Naive thymus-derived CD4-positive, alpha-beta T cell (primary cell): ENCODE measurements at regions of chr19 and their contacts with region 1.

Region 1: DNA sequence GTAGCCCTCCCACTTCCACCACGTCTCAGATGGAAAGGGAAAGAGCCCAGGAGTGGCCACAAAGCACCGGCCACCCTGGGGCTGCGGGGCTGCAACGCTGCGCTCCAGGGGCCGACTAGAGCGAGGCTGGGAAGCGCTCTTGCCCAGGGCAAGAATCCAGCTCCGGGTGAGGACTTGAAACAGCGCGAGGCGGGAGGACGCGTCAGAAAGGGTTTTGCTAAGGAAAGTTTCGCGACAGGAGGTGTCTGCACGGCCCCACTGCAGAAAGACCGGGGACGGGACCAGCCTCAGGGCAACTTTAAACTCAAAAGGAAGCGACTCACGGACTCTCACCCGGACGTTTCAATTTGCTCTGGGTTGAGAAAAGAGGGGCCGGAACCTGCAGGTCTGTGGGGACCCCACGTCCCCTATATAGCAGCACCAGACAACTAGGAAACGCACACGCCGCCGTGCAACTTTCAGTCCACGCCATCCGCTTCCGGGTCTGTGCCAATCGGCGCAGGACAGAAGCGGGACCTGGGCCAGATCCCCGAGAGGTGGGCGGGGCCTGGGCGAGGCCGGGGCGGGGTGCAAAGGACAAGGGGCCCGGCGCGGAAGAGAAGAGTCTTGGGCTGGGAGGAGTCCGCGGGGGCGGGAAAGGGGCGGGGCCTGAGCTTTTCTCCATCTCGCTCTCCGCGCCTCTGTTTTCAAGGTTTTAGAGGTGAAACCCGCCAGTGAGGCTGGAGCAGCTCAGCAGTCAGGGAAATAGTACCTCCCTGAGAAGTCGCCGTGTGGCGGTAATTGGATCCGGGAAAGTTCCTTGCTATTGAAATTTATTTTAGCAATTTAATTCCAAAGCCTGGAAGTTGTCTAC is at the start of gene ZNF816:
- DNase-seq: peak; percentile 94 to 99 (median 98)
- ATAC-seq: peak; percentile 100
- H3K4me3 ChIP-seq: peak within 1 kb of the TSS; percentile 77
- H3K4me3 Mint-ChIP-seq: peak within 1 kb of the TSS; percentile 87 to 96 (median 94)
- H3K27ac ChIP-seq: peak within 1 kb of the TSS; percentile 73
- H3K27ac Mint-ChIP-seq: peak within 1 kb of the TSS; percentile 82 to 95 (median 93)
- H3K4me1 ChIP-seq: peaks cover 12 to 14% of the 10 kb centered on the region in 2 donors
- H3K4me1 Mint-ChIP-seq: peaks cover 15 to 33% (median 29%) of the 10 kb centered on the region in 7 donors
- H3K27me3 ChIP-seq: no peaks in the 10 kb centered on the region
- H3K27me3 Mint-ChIP-seq: no peaks in the 10 kb centered on the region
- total RNA-seq, gene ZNF816: 5.0 to 25.7 (median 11.0) TPM

Region 2: DNA sequence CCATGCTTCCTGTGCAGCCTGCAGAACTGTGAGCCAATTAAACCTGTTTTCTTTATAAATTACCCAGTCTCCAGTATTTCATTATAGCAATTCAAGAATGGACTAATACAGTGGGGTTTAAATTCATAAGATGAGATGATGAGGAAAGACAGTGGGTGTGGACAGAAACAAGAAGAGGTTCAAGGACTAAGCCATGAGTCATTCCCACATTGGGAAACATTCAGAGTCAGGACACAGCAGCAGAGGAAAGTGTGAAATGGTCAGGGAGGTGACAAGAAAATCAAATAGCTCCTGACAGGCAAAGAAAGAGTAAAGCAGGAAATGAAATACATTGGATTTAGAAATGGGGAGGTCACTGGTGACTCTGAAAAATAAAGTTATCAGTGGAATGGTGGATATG is 876.1 kb before region 1 on chr19:
- CTCF ChIA-PET with region 1: no interaction called
- POLR2A ChIA-PET with region 1: no interaction called
- intact Hi-C with region 1: no loop called
- DNase-seq: no peak
- ATAC-seq: no peak
- H3K4me3 ChIP-seq: no peak overlapping the region
- H3K4me3 Mint-ChIP-seq: peak overlapping the region in 1 of 10 donors; percentile 49
- H3K27ac ChIP-seq: no peak overlapping the region
- H3K27ac Mint-ChIP-seq: no peak overlapping the region
- H3K4me1 ChIP-seq: no peaks in the 10 kb centered on the region
- H3K4me1 Mint-ChIP-seq: peaks cover 2 to 10% (median 7%) of the 10 kb centered on the region in 7 donors
- H3K27me3 ChIP-seq: no peaks in the 10 kb centered on the region
- H3K27me3 Mint-ChIP-seq: no peaks in the 10 kb centered on the region

Region 3: DNA sequence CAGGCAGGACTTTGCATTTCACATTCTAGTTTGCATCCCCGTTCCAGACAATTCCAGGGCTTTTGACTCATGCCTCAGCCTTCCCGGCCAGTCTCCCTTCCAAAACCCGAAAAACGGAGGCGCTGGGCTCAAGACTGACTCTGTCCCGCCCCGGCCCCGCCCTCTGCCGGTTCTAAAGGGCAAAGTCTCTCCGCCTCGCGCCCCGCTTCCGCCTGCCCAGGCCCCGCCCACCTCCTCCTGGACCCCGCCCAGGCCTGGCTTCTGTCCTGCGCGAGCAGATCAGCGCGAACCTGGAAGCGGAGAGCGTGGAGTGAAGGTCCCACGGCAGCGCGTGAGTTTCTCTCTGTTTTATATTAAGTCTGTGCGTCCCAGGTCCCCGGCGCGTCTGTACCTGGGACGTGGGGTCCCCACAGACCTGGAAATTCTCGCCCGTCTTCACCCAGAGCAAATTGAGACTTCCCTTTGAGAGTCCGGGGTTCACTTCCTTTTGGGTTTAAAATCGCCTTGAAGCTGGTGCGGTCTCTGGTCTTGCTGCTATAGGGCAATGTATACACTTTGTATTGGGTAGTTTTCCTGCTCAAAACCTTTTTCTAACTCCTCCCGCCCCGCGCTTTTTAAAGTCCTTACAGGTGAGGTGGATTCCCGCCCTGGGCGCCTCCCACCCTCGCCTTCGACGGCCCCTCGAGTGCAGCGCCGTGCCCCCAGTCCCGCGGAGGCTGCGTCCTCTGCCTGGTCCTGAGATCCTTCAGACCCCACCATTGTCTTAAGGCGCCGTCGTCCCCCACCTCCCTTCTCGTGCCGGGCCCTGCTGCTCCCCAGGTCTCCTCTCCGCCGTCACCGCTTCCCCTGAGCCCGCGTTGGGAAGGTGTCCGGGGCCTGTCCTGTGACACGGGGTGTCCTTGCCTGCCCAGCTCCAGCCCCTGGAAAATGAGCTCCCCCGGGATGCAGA is 361.3 kb before region 1 on chr19:
- CTCF ChIA-PET with region 1: no interaction called
- POLR2A ChIA-PET with region 1: no interaction called
- intact Hi-C with region 1: loop called in 1 of 2 experiments (anchors 1 kb)
- DNase-seq: peak; percentile 84 to 94 (median 91)
- ATAC-seq: peak; percentile 100
- H3K4me3 ChIP-seq: peak overlapping the region; percentile 89
- H3K4me3 Mint-ChIP-seq: peak overlapping the region; percentile 86 to 99 (median 92)
- H3K27ac ChIP-seq: peak overlapping the region; percentile 81
- H3K27ac Mint-ChIP-seq: peak overlapping the region; percentile 63 to 93 (median 81)
- H3K4me1 ChIP-seq: peaks cover 10 to 12% of the 10 kb centered on the region in 2 donors
- H3K4me1 Mint-ChIP-seq: peaks cover 11 to 43% (median 37%) of the 10 kb centered on the region in 7 donors
- H3K27me3 ChIP-seq: no peaks in the 10 kb centered on the region
- H3K27me3 Mint-ChIP-seq: no peaks in the 10 kb centered on the region

Region 4: GRCh38 chr19:52897144-52897935 is 65.3 kb before region 1 on chr19 and contains the start of gene ZNF320:
- CTCF ChIA-PET with region 1: no interaction called
- POLR2A ChIA-PET with region 1: no interaction called
- intact Hi-C with region 1: loop called (anchors 1 to 2 kb)
- DNase-seq: peak; percentile 78 to 92 (median 89)
- ATAC-seq: peak; percentile 100
- H3K4me3 ChIP-seq: peak within 1 kb of the TSS; percentile 96
- H3K4me3 Mint-ChIP-seq: peak within 1 kb of the TSS; percentile 88 to 96 (median 92)
- H3K27ac ChIP-seq: peak within 1 kb of the TSS; percentile 79
- H3K27ac Mint-ChIP-seq: peak within 1 kb of the TSS; percentile 19 to 94 (median 93)
- H3K4me1 ChIP-seq: peaks cover 4 to 5% of the 10 kb centered on the region in 2 donors
- H3K4me1 Mint-ChIP-seq: peaks cover 5 to 33% (median 17%) of the 10 kb centered on the region in 7 donors
- H3K27me3 ChIP-seq: no peaks in the 10 kb centered on the region
- H3K27me3 Mint-ChIP-seq: no peaks in the 10 kb centered on the region
- total RNA-seq, gene ZNF320: 4.5 to 13.4 (median 11.6) TPM

Region 5: DNA sequence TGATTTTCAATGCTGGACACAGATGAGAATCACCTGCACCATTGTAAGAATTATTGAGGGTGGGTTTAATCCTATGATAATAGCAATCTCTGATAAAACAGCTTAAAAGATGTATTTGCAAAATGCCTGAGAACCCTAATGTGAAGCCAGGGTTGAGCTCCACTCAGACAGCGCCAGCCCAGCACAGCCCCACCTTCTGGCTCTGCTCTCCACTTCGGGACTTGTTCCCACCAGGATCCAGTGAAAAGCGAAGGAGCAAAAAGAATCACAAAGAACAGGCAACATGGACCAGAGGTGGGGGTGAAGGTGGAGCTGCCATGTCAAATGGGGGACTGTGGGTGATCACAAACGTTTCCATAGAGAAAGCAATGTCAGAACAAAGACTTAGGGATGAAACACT is 18.7 kb after region 1 on chr19:
- CTCF ChIA-PET with region 1: no interaction called
- POLR2A ChIA-PET with region 1: no interaction called
- intact Hi-C with region 1: no loop called
- DNase-seq: no peak
- ATAC-seq: no peak
- H3K4me3 ChIP-seq: no peak overlapping the region
- H3K4me3 Mint-ChIP-seq: no peak overlapping the region
- H3K27ac ChIP-seq: no peak overlapping the region
- H3K27ac Mint-ChIP-seq: peak overlapping the region in 1 of 9 donors; percentile 78
- H3K4me1 ChIP-seq: no peaks in the 10 kb centered on the region
- H3K4me1 Mint-ChIP-seq: no peaks in the 10 kb centered on the region
- H3K27me3 ChIP-seq: no peaks in the 10 kb centered on the region
- H3K27me3 Mint-ChIP-seq: peaks cover 0 to 5% (median 0%) of the 10 kb centered on the region in 5 donors

Region 6: GRCh38 chr19:52993323-52994178 is 30.9 kb after region 1 on chr19:
- CTCF ChIA-PET with region 1: no interaction called
- POLR2A ChIA-PET with region 1: no interaction called
- intact Hi-C with region 1: loop called (anchors 1 kb)
- DNase-seq: peak; percentile 49 to 85 (median 81)
- ATAC-seq: peak; percentile 100
- H3K4me3 ChIP-seq: peak overlapping the region; percentile 60
- H3K4me3 Mint-ChIP-seq: peak overlapping the region; percentile 56 to 92 (median 86)
- H3K27ac ChIP-seq: no peak overlapping the region
- H3K27ac Mint-ChIP-seq: peak overlapping the region in 5 of 9 donors; percentile 25 to 83 (median 54)
- H3K4me1 ChIP-seq: peaks cover 0 to 6% of the 10 kb centered on the region in 2 donors
- H3K4me1 Mint-ChIP-seq: peaks cover 8 to 26% (median 14%) of the 10 kb centered on the region in 7 donors
- H3K27me3 ChIP-seq: no peaks in the 10 kb centered on the region
- H3K27me3 Mint-ChIP-seq: peaks cover 0 to 23% (median 14%) of the 10 kb centered on the region in 5 donors

Region 7: DNA sequence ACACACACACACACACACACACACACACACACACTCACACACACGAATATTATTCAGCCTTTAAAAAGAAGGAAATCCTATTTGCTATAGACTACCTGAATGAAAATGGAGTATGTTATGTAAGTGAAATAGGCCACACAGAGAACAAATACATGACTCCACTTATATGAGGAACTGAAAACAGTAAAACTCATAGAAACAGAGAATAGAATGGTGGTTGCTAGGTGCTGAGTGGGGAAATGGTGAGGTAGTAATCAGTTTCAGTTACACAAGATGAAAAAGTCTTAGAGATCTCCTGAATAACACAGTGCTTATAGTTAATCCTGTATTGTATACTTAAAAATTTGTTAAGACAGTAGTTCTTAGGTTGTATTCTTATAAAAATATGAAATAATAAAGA is 283.9 kb after region 1 on chr19:
- CTCF ChIA-PET with region 1: no interaction called
- POLR2A ChIA-PET with region 1: no interaction called
- intact Hi-C with region 1: no loop called
- DNase-seq: no peak
- ATAC-seq: no peak
- H3K4me3 ChIP-seq: no peak overlapping the region
- H3K4me3 Mint-ChIP-seq: no peak overlapping the region
- H3K27ac ChIP-seq: no peak overlapping the region
- H3K27ac Mint-ChIP-seq: no peak overlapping the region
- H3K4me1 ChIP-seq: no peaks in the 10 kb centered on the region
- H3K4me1 Mint-ChIP-seq: peaks cover 0 to 1% (median 0%) of the 10 kb centered on the region in 7 donors
- H3K27me3 ChIP-seq: no peaks in the 10 kb centered on the region
- H3K27me3 Mint-ChIP-seq: peaks cover 0 to 5% (median 0%) of the 10 kb centered on the region in 5 donors

Region 8: GRCh38 chr19:53365134-53365898 is 402.7 kb after region 1 on chr19 and contains the start of gene ZNF525:
- CTCF ChIA-PET with region 1: no interaction called
- POLR2A ChIA-PET with region 1: no interaction called
- intact Hi-C with region 1: loop called in 1 of 2 experiments (anchors 10 kb)
- DNase-seq: peak; percentile 94 to 97 (median 96)
- ATAC-seq: peak; percentile 100
- H3K4me3 ChIP-seq: peak within 1 kb of the TSS; percentile 96
- H3K4me3 Mint-ChIP-seq: peak within 1 kb of the TSS; percentile 94 to 98 (median 96)
- H3K27ac ChIP-seq: peak within 1 kb of the TSS; percentile 80
- H3K27ac Mint-ChIP-seq: peak within 1 kb of the TSS; percentile 91 to 98 (median 94)
- H3K4me1 ChIP-seq: no peaks in the 10 kb centered on the region
- H3K4me1 Mint-ChIP-seq: peaks cover 12 to 35% (median 31%) of the 10 kb centered on the region in 7 donors
- H3K27me3 ChIP-seq: no peaks in the 10 kb centered on the region
- H3K27me3 Mint-ChIP-seq: no peaks in the 10 kb centered on the region
- total RNA-seq, gene ZNF525: 11.5 to 33.7 (median 24.2) TPM